Activated CD4-positive, alpha-beta T cell treated with anti-CD3 and anti-CD28 coated beads, Interleukin-2, amount 10 ng/mL, durations not matched to agents 24 days and 14 days (primary cell): ENCODE measurements at regions of chr2 and their contacts with region 1.

Region 1: GRCh38 chr2:68715353-68716041 is 19.1 kb upstream of the ARHGAP25 start:
- DNase-seq: peak; percentile 75
- H3K4me3 Mint-ChIP-seq: peak overlapping the region; percentile 1
- H3K27ac Mint-ChIP-seq: peak overlapping the region; percentile 75
- H3K4me1 Mint-ChIP-seq: peaks cover 80% of the 10 kb centered on the region
- H3K27me3 Mint-ChIP-seq: no peaks in the 10 kb centered on the region

Region 2: DNA sequence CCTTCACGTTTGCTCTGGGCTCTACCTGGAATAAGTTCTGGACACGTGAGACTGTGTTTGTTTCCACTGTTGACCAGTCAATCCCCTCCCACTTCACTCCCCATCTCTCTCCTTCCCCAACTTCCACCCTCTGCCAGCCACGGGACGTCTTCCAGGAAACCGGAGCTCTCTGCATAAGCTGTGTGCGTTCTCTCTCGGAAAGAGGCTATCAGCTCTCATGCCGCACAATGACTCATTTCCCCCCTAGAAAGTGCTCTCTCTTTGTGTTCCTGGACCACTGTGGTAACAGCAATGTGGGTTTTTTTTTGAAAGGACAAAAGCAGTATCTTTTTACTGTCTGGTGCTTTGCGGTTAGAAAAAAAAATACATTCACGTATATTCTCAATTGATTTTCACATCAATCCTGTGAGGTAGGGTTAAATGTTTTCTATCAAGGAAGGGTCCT is 61.9 kb before region 1 on chr2:
- intact Hi-C with region 1: loop called (anchors 1 kb)
- DNase-seq: peak; percentile 88
- H3K4me3 Mint-ChIP-seq: peak overlapping the region; percentile 66
- H3K27ac Mint-ChIP-seq: peak overlapping the region; percentile 71
- H3K4me1 Mint-ChIP-seq: peaks cover 46% of the 10 kb centered on the region
- H3K27me3 Mint-ChIP-seq: peaks cover 36% of the 10 kb centered on the region

Region 3: DNA sequence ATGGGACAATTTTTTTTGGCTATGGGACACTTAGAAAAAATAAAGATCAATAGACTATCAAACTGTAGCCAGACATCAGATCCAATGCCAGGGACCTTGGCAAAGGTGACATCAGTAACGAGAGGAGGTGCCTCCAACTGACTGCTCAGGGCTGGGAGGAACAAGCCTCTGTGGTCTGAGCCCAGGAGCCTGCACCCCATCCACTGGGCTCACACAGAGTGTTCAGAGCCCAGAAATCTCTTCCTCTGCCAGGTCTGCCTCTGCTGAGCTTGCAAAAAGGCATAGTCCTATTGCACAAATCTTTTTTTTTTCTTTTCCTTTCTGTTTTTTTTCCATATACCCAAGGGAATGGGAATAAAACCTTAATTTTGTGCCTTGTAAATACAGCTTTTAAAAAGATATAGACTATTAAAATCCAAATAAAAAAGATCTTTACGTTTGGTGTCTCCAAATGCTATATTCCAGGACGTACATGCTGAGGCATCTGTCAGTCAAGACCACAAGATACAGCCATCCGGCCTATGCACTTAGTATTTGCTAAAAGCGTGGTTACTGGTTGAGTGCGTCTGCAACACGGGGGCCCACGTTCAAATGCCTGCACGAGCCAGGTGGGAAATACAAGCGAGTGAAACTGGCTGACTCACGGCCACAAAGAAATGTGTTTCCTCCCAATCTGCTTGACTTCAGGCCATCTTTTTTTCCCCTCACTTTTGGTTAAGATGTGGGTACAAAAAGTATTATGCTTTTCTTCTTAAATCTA is 11.3 kb after region 1 on chr2:
- intact Hi-C with region 1: loop called (anchors 1 kb)
- DNase-seq: peak; percentile 92
- H3K4me3 Mint-ChIP-seq: peak overlapping the region; percentile 56
- H3K27ac Mint-ChIP-seq: peak overlapping the region; percentile 82
- H3K4me1 Mint-ChIP-seq: peaks cover 70% of the 10 kb centered on the region
- H3K27me3 Mint-ChIP-seq: no peaks in the 10 kb centered on the region

Region 4: GRCh38 chr2:68839260-68839833 is 123.8 kb after region 1 on chr2:
- intact Hi-C with region 1: loop called (anchors 2 kb)
- DNase-seq: peak; percentile 71
- H3K4me3 Mint-ChIP-seq: no peak overlapping the region
- H3K27ac Mint-ChIP-seq: no peak overlapping the region
- H3K4me1 Mint-ChIP-seq: peaks cover 30% of the 10 kb centered on the region
- H3K27me3 Mint-ChIP-seq: peaks cover 12% of the 10 kb centered on the region

Region 5: DNA sequence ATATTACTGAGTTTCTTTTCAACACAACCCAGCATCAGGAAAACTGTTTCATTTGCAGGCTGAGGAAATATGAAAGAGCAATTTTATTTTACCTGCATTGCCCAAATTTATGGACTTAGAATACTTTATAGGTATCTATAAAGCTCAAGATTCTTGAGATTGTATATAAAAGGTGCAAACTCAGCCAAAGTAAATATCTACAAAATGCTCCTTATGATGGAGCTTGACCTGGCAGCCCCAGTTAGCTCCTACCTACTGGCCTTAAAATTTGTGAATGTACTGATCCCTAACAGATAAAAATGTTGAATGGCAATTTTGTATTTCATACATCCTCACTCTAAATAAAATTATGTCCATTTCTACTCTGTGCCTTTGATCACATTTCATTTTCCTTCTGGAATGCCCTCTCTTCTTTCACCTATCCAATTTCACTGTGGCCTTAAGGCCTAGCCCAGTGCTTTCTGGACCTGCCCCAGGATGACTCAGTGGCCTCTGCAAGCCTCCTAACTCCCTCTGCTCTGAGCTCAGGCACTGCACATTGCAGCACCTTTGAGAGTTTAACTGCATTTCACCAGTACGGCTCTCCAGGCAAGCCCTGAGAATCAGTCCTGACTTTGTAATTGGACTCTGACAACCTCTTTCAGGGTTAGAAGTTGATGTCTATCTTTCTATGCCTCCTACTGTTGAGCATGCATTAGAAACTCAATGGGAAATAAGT is 423.5 kb after region 1 on chr2:
- intact Hi-C with region 1: no loop called
- DNase-seq: no peak
- H3K4me3 Mint-ChIP-seq: no peak overlapping the region
- H3K27ac Mint-ChIP-seq: no peak overlapping the region
- H3K4me1 Mint-ChIP-seq: no peaks in the 10 kb centered on the region
- H3K27me3 Mint-ChIP-seq: peaks cover 30% of the 10 kb centered on the region